H1 (cell line): ENCODE measurements at regions of chr17 and their contacts with region 1.

Region 1: GRCh38 chr17:37438141-37438540 is 31.5 kb downstream of the TADA2A start:
- DNase-seq: no peak
- H3K4me3 ChIP-seq: no peak overlapping the region
- H3K27ac ChIP-seq: no peak overlapping the region
- H3K4me1 ChIP-seq: no peaks in the 10 kb centered on the region
- H3K27me3 ChIP-seq: no peaks in the 10 kb centered on the region
- CTCF ChIP-seq: peak in 2 of 3 experiments; percentile 10 to 55; a peak in 2 of 4 replicates
- EP300 ChIP-seq: no peak
- POLR2A ChIP-seq: no peak
- RAD21 ChIP-seq: no peak

Region 2: GRCh38 chr17:37276527-37276926 is 161.6 kb before region 1 on chr17:
- CTCF ChIA-PET with region 1: no interaction called
- POLR2A ChIA-PET with region 1: no interaction called
- DNase-seq: no peak
- H3K4me3 ChIP-seq: no peak overlapping the region
- H3K27ac ChIP-seq: no peak overlapping the region
- H3K4me1 ChIP-seq: no peaks in the 10 kb centered on the region
- H3K27me3 ChIP-seq: no peaks in the 10 kb centered on the region
- CTCF ChIP-seq: no peak
- EP300 ChIP-seq: no peak
- POLR2A ChIP-seq: no peak
- RAD21 ChIP-seq: no peak

Region 3: GRCh38 chr17:37422971-37423625 is 15.0 kb before region 1 on chr17:
- CTCF ChIA-PET with region 1: interaction called, 55 read pairs
- POLR2A ChIA-PET with region 1: interaction called, 4 read pairs
- DNase-seq: no peak
- H3K4me3 ChIP-seq: no peak overlapping the region
- H3K27ac ChIP-seq: no peak overlapping the region
- H3K4me1 ChIP-seq: no peaks in the 10 kb centered on the region
- H3K27me3 ChIP-seq: no peaks in the 10 kb centered on the region
- CTCF ChIP-seq: no peak
- EP300 ChIP-seq: no peak
- POLR2A ChIP-seq: no peak
- RAD21 ChIP-seq: no peak

Region 4: GRCh38 chr17:37458805-37459204 is 20.7 kb after region 1 on chr17:
- CTCF ChIA-PET with region 1: interaction called, 10 read pairs
- POLR2A ChIA-PET with region 1: no interaction called
- DNase-seq: no peak
- H3K4me3 ChIP-seq: no peak overlapping the region
- H3K27ac ChIP-seq: no peak overlapping the region
- H3K4me1 ChIP-seq: peaks cover 0 to 5% (median 0%) of the 10 kb centered on the region in 4 experiments; a peak in 1 of 7 replicates
- H3K27me3 ChIP-seq: no peaks in the 10 kb centered on the region
- CTCF ChIP-seq: no peak
- EP300 ChIP-seq: no peak
- POLR2A ChIP-seq: no peak
- RAD21 ChIP-seq: no peak